PC-9 (cell line): ENCODE measurements at regions of chr19 and their contacts with region 1.

Region 1: DNA sequence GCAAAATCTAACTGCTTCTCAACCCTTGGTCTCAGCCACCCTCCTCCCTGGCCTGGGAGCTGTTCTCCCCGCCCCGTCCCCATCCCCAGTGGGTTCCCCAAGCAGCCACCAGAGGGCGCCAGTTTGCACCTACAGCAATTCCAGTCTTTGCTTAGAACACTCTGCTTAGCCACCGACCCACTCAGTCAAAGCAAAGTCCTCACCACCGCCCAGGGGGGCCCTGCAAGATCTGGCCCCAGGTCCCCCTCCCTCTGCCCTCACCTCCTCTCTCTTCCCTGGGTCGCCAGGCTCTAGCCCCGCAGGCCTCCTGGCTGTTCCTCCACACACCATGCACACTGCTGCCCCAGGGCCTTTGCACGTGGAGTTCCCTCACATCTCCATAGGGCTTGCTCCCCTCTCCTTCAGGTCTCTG is 12.4 kb downstream of the TMEM143 start:
- DNase-seq: peak in 1 of 2 experiments; percentile 70
- H3K4me3 ChIP-seq: no peak overlapping the region
- H3K27ac ChIP-seq: no peak overlapping the region
- H3K4me1 ChIP-seq: peaks cover 27% of the 10 kb centered on the region
- H3K27me3 ChIP-seq: no peaks in the 10 kb centered on the region
- CTCF ChIP-seq: peak; percentile 92

Region 2: GRCh38 chr19:48363810-48364563 is 12.6 kb after region 1 on chr19 and contains the starts of genes SYNGR4 and TMEM143:
- CTCF ChIA-PET with region 1: interaction called, 10 read pairs
- POLR2A ChIA-PET with region 1: interaction called, 3 read pairs
- intact Hi-C with region 1: no loop called
- DNase-seq: peak; percentile 99 to 100
- H3K4me3 ChIP-seq: peak within 1 kb of the TSS; percentile 72
- H3K27ac ChIP-seq: peak within 1 kb of the TSS; percentile 63
- H3K4me1 ChIP-seq: peaks cover 7% of the 10 kb centered on the region
- H3K27me3 ChIP-seq: no peaks in the 10 kb centered on the region
- CTCF ChIP-seq: no peak
- total RNA-seq, gene SYNGR4: 1.3 and 2.1 TPM in 2 replicates
- total RNA-seq, gene TMEM143: 24.8 and 31.3 TPM in 2 replicates

Region 3: DNA sequence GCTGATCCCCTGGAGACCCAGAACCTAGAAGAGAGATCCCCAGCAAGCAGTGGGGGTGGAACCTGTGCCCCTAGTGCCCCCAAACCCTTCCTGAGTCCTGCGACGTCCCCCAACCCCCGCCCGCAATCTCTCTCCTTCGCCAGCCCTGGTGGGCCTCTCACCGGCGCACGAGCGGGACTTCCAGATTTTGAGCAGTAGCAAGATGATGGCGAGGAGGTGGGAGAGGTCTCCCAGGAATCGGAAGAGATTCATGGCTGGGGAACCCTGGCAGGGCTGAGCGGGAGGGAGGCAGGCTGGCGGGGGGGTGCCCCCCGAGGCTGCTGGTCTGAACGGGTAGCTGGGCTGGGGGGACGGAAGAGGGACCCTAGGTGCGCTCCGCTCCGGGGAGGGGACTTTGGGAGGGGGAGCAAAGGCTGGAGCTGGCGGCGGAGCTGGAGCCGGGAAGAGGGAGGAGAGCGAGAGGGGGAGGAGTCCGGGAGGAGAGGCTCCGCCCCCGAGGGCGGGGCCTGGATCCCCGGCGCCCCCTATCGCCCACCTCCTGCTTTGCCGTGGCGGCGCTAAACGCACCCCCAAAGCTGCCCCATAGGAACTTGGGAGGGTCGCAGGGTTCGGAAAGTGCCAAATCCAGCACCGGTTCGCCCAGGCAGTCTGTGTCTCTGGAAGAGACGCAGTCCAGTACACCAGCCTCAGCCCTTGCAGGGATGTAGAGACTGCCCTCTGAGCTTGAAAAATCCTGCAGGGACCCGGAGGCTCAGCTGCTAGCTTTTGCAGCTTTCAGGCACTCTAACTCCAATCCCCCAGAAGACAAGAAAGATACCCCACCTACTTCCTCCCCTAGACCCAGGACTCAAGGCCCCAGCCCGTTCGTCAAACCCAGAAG is 40.0 kb after region 1 on chr19 and contains the start of gene KDELR1:
- CTCF ChIA-PET with region 1: interaction called, 10 read pairs
- POLR2A ChIA-PET with region 1: no interaction called
- intact Hi-C with region 1: no loop called
- DNase-seq: peak in 1 of 2 experiments; percentile 82
- H3K4me3 ChIP-seq: peak within 1 kb of the TSS; percentile 91
- H3K27ac ChIP-seq: peak within 1 kb of the TSS; percentile 58
- H3K4me1 ChIP-seq: no peaks in the 10 kb centered on the region
- H3K27me3 ChIP-seq: peaks cover 11% of the 10 kb centered on the region
- CTCF ChIP-seq: peak; percentile 95
- total RNA-seq, gene KDELR1: 220 and 261 TPM in 2 replicates

Region 4: GRCh38 chr19:48452289-48453190 is 101.2 kb after region 1 on chr19:
- CTCF ChIA-PET with region 1: interaction called, 14 read pairs
- POLR2A ChIA-PET with region 1: no interaction called
- intact Hi-C with region 1: no loop called
- DNase-seq: peak; percentile 56 to 75
- H3K4me3 ChIP-seq: no peak overlapping the region
- H3K27ac ChIP-seq: 0 out of 2 replicates have a peak overlapping the region, but pooled peaks have one; percentile 14
- H3K4me1 ChIP-seq: 0 out of 2 replicates have a peak, but pooled peaks cover 12% of the 10 kb centered on the region
- H3K27me3 ChIP-seq: no peaks in the 10 kb centered on the region
- CTCF ChIP-seq: no peak

Region 5: DNA sequence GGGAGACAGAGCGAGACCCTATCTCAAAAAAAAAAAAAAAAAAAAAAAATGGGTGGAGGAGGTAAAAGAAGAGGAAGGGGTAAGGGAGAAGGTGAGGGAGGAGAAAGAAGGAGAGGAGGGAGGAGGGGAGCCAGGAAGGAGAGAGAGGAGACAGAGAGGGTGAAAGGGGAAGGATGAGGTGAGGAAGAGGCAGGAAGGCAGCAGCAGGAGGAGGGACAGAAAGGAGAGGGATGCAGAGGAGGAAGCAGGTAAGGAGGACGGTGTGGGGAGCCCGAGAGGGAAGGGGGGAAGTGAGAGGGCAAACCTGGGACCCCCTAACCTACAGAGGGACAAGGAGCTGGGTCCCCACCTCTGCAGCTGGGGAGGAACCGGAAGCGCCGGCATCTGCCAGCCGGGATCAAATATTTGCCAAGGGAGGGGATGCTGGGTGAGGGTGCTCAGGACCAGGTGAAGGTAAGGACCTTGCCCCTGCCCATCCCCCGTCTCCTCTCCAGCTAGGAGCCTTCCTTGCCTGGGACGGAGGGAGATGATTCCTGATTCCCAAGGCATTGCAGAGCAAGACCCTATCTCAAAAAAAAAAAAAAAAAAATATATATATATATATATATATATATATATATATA is 250.9 kb after region 1 on chr19:
- CTCF ChIA-PET with region 1: interaction called, 13 read pairs
- POLR2A ChIA-PET with region 1: no interaction called
- intact Hi-C with region 1: no loop called
- DNase-seq: peak in 1 of 2 experiments; percentile 8
- H3K4me3 ChIP-seq: no peak overlapping the region
- H3K27ac ChIP-seq: no peak overlapping the region
- H3K4me1 ChIP-seq: 0 out of 2 replicates have a peak, but pooled peaks cover 5% of the 10 kb centered on the region
- H3K27me3 ChIP-seq: no peaks in the 10 kb centered on the region
- CTCF ChIP-seq: no peak